ENCODE measurements at regions of chrX and their contacts with region 1.

Region 1: DNA sequence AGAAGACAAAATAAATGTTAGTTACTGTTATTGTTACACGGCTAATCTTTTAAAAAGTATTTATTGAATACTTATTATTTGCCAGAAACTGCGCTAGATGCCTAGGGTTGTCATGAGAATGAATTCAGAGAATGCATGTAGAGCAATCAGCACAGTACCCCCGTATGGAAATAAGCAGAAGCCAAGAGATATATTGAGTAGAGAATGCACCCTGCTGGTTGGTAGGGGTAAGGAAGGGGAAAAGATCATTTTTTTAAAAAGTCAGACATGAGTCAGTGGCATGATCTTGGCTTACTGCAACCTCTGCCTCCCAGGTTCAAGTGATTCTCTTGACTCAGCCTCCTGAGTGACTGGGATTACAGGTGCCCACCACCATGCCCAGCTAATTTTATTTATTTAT is 13.1 kb upstream of the DRP2 start:
- DNase-seq: no peak
- ATAC-seq: no peak
- H3K4me3 ChIP-seq: no peak overlapping the region
- H3K27ac ChIP-seq: no peak overlapping the region
- H3K4me1 ChIP-seq: no peaks in the 10 kb centered on the region
- H3K27me3 ChIP-seq: no peaks in the 10 kb centered on the region

Region 2: GRCh38 chrX:100895365-100896075 is 311.0 kb before region 1 on chrX:
- intact Hi-C with region 1: loop called in 1 of 2 experiments (anchors 10 kb)
- DNase-seq: no peak
- ATAC-seq: no peak
- H3K4me3 ChIP-seq: no peak overlapping the region
- H3K27ac ChIP-seq: no peak overlapping the region
- H3K4me1 ChIP-seq: no peaks in the 10 kb centered on the region
- H3K27me3 ChIP-seq: no peaks in the 10 kb centered on the region

Region 3: DNA sequence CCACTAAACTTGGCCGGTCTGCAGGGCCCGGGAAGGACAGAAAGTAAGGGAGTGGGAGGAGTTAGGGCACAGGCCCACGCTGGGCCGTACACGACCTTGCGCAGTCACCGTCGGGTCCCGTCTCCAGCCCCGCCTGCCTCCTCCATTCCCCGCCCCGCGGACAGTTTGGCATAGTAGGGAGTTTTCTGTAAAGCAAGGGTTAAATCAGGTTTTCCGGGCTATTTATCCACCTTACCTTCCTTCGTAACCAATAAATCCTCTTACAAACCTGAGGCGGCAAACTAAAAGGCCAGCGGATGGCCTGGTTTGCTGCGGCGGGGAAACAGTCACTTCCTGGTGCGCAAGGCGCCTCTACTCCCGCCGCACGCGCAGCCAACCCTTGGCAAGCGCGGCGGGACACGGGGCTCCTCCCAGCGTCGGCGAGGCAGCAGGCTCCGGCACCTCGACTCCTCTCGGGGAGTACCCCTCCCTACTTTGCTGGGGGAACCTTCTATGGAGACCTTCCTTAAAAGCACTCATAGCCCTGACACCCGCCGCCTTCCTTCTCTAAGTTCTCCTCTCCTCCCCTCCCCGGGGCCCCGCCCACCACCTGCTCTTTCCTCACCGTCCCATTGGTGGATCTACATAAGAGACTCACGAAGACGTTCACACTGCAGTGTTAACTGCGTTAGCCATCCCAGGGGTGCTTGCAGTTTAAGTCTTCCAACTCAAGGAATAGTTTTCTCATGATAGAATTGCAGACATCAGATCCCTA is 154.7 kb before region 1 on chrX and contains the start of gene TRMT2B:
- intact Hi-C with region 1: loop called in 1 of 2 experiments (anchors 5 kb)
- DNase-seq: peak; percentile 88 to 91
- ATAC-seq: peak; percentile 95
- H3K4me3 ChIP-seq: peak within 1 kb of the TSS; percentile 60 to 66
- H3K27ac ChIP-seq: peak within 1 kb of the TSS in 1 of 2 donors; percentile 73
- H3K4me1 ChIP-seq: no peaks in the 10 kb centered on the region
- H3K27me3 ChIP-seq: no peaks in the 10 kb centered on the region
- total RNA-seq, gene TRMT2B: 15.1 to 19.6 TPM